ENCODE measurements at regions of chr4 and their contacts with region 1.

Region 1: DNA sequence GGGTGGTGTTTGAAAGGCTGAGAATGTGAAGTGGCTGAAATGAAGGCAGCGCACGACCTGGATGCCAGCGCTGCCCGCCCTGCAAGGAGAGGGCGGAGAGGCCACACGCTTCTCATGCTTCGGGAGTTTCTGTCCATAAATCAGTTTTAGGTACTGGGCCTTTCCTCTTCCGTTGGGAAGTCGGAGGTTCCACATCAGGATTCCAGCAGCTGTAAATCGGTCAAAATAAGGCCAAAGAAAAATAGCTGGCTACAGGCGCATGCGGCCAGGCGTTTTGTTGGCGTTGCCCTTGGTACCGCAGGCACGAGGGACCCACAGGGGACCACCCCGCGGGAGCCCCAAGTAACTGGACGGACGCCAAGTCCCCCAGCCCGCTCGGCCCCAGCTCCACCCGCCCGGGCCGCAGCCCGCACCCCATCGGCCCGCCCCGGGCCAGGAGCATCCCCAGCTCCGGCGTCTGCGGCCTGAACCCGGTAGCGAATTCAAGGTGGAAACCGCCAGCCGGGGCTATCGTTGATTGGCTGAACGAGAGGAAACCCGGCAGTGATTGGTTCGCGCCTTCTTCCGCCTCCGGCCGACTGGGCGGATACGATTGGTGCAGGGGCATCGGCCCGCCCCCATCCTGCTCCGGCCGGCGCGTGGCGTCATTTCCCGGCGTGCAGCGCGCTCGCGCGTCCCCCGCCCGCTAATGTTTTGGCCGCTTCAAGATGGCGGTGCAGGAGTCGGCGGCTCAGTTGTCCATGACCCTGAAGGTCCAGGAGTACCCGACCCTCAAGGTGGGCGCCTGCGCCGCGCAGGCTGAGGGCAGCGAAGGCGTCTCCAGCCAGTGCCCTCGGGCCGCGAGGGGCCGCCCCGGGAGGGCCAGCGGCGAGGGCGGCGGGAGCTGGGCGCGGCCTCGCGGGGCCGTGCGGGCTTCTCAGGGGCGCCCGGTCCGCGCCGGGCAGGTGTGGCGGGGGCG is at the start of gene MAEA:
- DNase-seq: peak; percentile 91 to 97 (median 96)
- ATAC-seq: peak; percentile 98
- H3K4me3 ChIP-seq: peak within 1 kb of the TSS; percentile 96
- H3K4me3 Mint-ChIP-seq: peak within 1 kb of the TSS; percentile 91 to 99 (median 93)
- H3K27ac ChIP-seq: peak within 1 kb of the TSS; percentile 93
- H3K27ac Mint-ChIP-seq: peak within 1 kb of the TSS; percentile 88 to 94 (median 90)
- H3K4me1 ChIP-seq: peaks cover 22 to 34% of the 10 kb centered on the region in 2 donors
- H3K4me1 Mint-ChIP-seq: peaks cover 23 to 49% (median 37%) of the 10 kb centered on the region in 7 donors
- H3K27me3 ChIP-seq: no peaks in the 10 kb centered on the region
- H3K27me3 Mint-ChIP-seq: no peaks in the 10 kb centered on the region
- total RNA-seq, gene MAEA: 56.2 to 92.2 (median 79.4) TPM

Region 2: DNA sequence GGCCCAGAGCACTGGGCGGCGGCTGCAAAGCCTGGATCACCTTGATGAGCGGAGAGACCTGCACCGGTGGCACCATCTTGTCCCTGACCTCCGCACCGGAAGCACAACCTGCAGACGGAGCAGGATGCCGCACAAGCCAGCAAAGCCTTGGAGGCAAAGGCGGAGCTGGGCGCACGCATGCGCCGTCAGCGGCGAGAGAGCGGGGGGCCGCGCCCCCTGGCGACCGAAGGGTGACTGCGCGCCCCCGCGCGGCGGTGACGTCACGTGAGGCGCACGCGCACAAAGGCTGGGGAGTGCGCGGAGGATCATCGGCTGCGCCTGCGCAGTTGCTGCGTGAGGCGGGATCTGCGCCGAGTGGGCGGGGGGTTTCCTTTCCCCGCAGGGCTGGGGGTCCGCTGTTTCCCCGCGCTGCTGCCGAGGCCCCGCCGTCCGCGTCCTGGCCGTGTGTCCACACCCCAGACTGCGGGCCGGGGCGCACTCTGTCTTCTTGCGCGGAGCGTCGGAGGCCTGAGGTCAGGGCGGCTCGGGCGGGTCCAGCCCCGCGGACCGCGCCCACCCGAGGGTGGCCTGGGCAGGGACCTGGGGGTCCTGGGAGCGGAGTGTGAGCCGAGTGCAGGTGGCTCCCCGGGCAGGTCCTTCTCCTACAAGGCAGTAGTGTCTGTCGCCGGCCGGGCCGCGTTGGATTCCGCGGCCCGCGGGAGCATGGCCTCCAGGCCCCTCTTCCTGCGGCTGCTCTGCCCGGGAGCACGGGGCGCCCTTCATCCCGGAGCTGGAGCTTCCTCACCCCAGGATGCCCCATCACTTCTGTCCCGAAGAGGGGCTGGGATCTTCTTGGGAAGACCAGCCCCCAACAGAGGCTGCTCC is 615.1 kb before region 1 on chr4 and contains the starts of genes ATP5ME and MYL5:
- CTCF ChIA-PET with region 1: no interaction called
- POLR2A ChIA-PET with region 1: interaction called, 3 read pairs
- intact Hi-C with region 1: loop called in 1 of 2 experiments (anchors 1 kb)
- DNase-seq: peak; percentile 97 to 100 (median 99)
- ATAC-seq: peak; percentile 96
- H3K4me3 ChIP-seq: peak within 1 kb of the TSS; percentile 88
- H3K4me3 Mint-ChIP-seq: peak within 1 kb of the TSS; percentile 84 to 92 (median 88)
- H3K27ac ChIP-seq: peak within 1 kb of the TSS; percentile 100
- H3K27ac Mint-ChIP-seq: peak within 1 kb of the TSS; percentile 80 to 91 (median 89)
- H3K4me1 ChIP-seq: peaks cover 7 to 16% of the 10 kb centered on the region in 2 donors
- H3K4me1 Mint-ChIP-seq: peaks cover 7 to 15% (median 8%) of the 10 kb centered on the region in 7 donors
- H3K27me3 ChIP-seq: no peaks in the 10 kb centered on the region
- H3K27me3 Mint-ChIP-seq: no peaks in the 10 kb centered on the region
- total RNA-seq, gene ATP5ME: 115 to 183 (median 123) TPM
- total RNA-seq, gene MYL5: 19.9 to 32.7 (median 23.8) TPM

Region 3: DNA sequence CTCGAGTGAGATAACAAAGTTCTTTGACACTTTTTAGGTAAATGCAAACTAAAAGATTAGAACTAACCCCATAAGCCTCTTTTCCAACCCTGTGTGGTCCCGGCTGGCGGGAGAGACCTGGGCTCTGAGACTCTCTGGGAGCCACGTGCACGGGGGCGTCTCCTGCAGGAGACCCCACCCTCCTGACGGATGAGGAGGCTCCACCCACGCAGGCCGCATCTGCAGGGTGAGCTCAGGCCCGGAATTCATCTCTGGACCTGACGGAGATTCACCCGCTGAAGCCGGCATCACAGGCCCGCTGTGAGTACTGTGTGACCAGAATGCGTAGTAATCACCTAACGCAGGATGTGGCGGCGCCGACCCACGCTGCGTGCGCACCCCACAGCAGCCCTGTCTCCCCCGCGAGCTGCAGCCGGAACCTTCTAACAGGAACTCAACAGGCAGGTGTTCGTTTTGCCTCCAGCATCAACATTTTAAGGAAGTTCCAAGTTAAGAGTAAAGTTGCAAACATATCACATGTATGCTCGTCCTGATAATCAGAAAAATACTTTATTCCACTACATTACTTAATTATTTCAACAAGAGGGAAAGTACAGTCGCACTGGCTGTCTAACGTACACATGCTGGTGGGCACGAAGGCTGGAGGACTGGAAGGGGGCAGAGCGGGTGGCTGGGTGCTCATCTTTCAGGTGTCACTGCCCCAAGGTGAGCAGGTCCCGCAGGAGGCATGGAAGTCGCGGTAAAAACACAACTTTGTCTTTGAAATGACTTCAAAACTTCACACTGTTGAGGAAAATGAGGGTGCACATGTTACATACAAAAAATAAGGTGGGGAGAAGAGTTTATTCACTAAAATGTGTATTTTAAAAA is 233.5 kb before region 1 on chr4:
- CTCF ChIA-PET with region 1: no interaction called
- POLR2A ChIA-PET with region 1: no interaction called
- intact Hi-C with region 1: loop called in 1 of 2 experiments (anchors 1 kb)
- DNase-seq: peak; percentile 65 to 93 (median 91)
- ATAC-seq: peak; percentile 96
- H3K4me3 ChIP-seq: peak overlapping the region; percentile 74
- H3K4me3 Mint-ChIP-seq: peak overlapping the region; percentile 74 to 89 (median 85)
- H3K27ac ChIP-seq: peak overlapping the region; percentile 67
- H3K27ac Mint-ChIP-seq: peak overlapping the region; percentile 87 to 98 (median 95)
- H3K4me1 ChIP-seq: peaks cover 13 to 14% of the 10 kb centered on the region in 2 donors
- H3K4me1 Mint-ChIP-seq: peaks cover 8 to 17% (median 10%) of the 10 kb centered on the region in 7 donors
- H3K27me3 ChIP-seq: no peaks in the 10 kb centered on the region
- H3K27me3 Mint-ChIP-seq: peaks cover 0 to 17% (median 0%) of the 10 kb centered on the region in 5 donors

Region 4: DNA sequence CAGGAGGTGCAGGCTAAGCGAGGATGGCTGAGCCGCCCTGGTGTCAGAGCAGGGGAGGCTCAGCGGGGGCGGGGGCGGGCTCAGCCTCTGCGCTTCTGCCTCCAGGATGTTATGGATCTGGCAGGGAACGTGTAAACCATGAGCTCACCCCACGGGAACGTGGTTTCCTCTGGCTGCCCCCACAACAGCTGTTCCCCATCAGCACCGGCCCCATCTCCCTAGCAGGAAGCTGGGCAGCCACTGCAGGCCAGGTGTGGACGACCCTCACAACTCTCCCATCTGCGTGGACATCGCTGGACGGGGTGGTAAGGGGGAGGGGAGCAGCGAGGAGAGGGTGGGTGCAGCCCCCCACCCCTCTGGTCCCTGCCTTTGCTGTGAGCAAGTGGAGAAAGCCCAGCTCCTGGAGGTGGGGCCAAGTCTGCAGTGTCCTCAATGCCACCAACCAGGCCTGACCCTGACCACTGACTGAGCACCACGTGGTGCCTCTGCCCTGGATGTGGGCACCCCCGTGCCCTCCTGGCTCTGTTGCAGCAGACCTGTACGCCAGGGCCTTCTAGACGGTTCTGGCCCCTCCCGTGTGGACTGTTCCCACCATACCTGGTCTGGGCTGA is 89.0 kb before region 1 on chr4:
- CTCF ChIA-PET with region 1: no interaction called
- POLR2A ChIA-PET with region 1: interaction called, 3 read pairs
- intact Hi-C with region 1: loop called in 1 of 2 experiments (anchors 1 kb)
- DNase-seq: peak in 1 of 9 donors; percentile 26
- ATAC-seq: no peak
- H3K4me3 ChIP-seq: peak overlapping the region; percentile 85
- H3K4me3 Mint-ChIP-seq: peak overlapping the region; percentile 29 to 93 (median 84)
- H3K27ac ChIP-seq: peak overlapping the region; percentile 68
- H3K27ac Mint-ChIP-seq: peak overlapping the region in 5 of 9 donors; percentile 19 to 99 (median 59)
- H3K4me1 ChIP-seq: peaks cover 21 to 59% of the 10 kb centered on the region in 2 donors
- H3K4me1 Mint-ChIP-seq: peaks cover 12 to 57% (median 43%) of the 10 kb centered on the region in 7 donors
- H3K27me3 ChIP-seq: no peaks in the 10 kb centered on the region
- H3K27me3 Mint-ChIP-seq: no peaks in the 10 kb centered on the region

Region 5: DNA sequence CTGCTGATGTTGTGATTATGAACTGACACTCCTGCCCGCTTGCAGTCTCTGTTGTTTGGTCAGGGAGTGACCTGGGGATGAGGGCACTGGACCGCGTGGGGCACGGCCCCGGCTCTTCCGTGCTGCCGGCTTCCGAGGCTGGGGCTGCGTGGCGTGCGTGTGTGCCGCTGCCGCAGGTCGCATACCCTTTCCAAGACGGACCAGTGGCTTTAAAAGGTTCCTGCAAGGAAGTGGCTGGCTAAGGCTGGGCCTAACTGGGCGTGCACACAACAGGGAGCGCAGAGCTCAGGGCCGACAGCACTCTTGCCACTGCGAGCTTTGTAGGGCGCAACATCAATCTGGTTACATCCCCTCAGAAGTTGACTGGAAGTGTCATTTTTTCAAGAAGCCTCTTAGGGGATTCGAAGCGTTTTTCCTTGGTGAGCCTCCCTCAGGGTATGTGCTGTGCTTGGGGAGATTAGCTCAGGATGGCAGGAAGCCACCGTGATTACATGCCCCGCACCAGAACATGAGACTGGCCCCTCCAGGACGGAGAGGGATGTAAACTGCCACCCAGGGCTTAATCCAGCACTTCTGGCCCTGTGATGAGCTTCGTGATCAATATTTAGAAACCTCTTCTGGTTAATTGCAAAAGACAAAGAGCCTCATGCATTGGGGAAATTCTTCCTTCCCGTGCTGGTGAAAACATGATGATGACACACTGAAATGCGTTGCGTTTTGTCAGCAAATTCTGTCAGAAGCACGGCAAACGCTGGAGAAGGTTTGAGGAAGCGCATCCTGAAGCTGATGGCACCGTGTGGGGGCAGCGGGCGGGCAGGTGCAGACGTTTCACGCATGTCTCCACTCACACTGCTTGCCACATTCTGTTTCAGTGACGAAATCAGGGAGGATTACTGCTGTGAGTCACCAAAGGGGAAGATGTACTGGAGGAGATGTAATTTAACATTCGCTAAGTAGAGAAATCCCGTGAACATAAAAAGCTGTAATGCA is 11.3 kb after region 1 on chr4:
- CTCF ChIA-PET with region 1: no interaction called
- POLR2A ChIA-PET with region 1: interaction called, 11 read pairs
- intact Hi-C with region 1: no loop called
- DNase-seq: peak in 1 of 9 donors; percentile 37
- ATAC-seq: peak; percentile 85
- H3K4me3 ChIP-seq: no peak overlapping the region
- H3K4me3 Mint-ChIP-seq: peak overlapping the region in 1 of 10 donors; percentile 33
- H3K27ac ChIP-seq: no peak overlapping the region
- H3K27ac Mint-ChIP-seq: peak overlapping the region in 5 of 9 donors; percentile 21 to 79 (median 40)
- H3K4me1 ChIP-seq: peaks cover 0 to under 1% of the 10 kb centered on the region in 2 donors
- H3K4me1 Mint-ChIP-seq: peaks cover 24 to 64% (median 52%) of the 10 kb centered on the region in 7 donors
- H3K27me3 ChIP-seq: no peaks in the 10 kb centered on the region
- H3K27me3 Mint-ChIP-seq: no peaks in the 10 kb centered on the region

Region 6: DNA sequence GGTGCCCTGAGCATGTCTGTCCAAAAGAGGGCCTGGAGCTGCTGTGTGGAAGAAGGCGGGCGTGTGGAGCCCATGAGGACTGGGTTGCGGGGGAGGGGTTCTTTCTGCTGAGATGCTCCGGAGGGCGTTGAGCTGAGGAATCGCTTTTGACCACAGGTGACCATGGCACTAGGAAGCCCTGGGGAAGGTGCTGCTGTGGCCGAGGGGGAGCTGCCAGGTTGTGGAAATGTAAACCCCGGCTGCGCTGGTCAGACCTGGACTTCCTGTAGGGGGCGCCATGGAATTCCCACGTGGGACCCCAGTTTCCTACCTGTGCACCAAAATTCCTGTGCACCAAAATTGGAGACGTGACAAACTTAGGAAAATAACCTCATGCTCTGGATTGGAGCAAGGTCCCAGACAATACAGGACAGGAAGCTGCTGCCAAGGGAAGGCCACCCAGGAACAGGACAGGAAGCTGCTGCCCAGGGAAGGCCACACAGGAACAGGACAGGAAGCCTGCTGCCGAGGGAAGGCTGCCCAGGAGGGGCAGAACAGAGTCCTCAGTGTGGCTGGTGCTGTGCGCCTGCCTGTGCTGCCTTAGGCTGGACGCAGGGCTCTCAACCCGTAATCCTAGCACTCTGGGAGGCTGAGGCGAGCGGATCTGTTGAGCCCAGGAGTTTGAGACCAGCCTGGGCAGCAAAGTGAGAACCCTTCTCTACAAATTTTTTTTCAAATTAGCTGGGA is 29.2 kb after region 1 on chr4:
- CTCF ChIA-PET with region 1: no interaction called
- POLR2A ChIA-PET with region 1: no interaction called
- intact Hi-C with region 1: no loop called
- DNase-seq: peak in 1 of 9 donors; percentile 15
- ATAC-seq: no peak
- H3K4me3 ChIP-seq: no peak overlapping the region
- H3K4me3 Mint-ChIP-seq: no peak overlapping the region
- H3K27ac ChIP-seq: no peak overlapping the region
- H3K27ac Mint-ChIP-seq: peak overlapping the region in 1 of 9 donors; percentile 65
- H3K4me1 ChIP-seq: peaks cover 0 to 7% of the 10 kb centered on the region in 2 donors
- H3K4me1 Mint-ChIP-seq: peaks cover 8 to 26% (median 16%) of the 10 kb centered on the region in 7 donors
- H3K27me3 ChIP-seq: no peaks in the 10 kb centered on the region
- H3K27me3 Mint-ChIP-seq: no peaks in the 10 kb centered on the region

Region 7: DNA sequence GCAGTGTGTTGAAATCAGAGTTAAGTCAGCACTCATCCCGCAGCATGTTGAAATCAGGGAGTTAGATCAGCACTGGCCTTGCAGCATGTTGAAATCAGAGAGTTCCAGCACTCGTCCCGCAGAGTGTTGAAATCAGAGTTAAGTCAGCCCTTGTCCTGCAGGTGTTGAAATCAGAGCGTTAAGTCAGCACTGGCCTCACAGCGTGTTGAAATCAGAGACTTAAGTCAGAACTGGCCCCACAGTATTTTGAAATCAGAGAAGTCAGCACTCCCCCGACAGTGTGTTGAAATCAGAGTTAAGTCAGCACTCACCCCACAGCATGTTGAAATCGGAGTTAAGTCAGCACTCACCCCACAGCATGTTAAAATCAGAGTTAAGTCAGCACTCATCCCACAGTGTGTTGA is 46.6 kb after region 1 on chr4:
- CTCF ChIA-PET with region 1: no interaction called
- POLR2A ChIA-PET with region 1: no interaction called
- intact Hi-C with region 1: no loop called
- DNase-seq: no peak
- ATAC-seq: no peak
- H3K4me3 ChIP-seq: no peak overlapping the region
- H3K4me3 Mint-ChIP-seq: no peak overlapping the region
- H3K27ac ChIP-seq: no peak overlapping the region
- H3K27ac Mint-ChIP-seq: peak overlapping the region in 3 of 9 donors; percentile 38 to 69 (median 55)
- H3K4me1 ChIP-seq: peaks cover 9% of the 10 kb centered on the region in 2 donors
- H3K4me1 Mint-ChIP-seq: peaks cover 9 to 34% (median 13%) of the 10 kb centered on the region in 7 donors
- H3K27me3 ChIP-seq: no peaks in the 10 kb centered on the region
- H3K27me3 Mint-ChIP-seq: no peaks in the 10 kb centered on the region

Region 8: DNA sequence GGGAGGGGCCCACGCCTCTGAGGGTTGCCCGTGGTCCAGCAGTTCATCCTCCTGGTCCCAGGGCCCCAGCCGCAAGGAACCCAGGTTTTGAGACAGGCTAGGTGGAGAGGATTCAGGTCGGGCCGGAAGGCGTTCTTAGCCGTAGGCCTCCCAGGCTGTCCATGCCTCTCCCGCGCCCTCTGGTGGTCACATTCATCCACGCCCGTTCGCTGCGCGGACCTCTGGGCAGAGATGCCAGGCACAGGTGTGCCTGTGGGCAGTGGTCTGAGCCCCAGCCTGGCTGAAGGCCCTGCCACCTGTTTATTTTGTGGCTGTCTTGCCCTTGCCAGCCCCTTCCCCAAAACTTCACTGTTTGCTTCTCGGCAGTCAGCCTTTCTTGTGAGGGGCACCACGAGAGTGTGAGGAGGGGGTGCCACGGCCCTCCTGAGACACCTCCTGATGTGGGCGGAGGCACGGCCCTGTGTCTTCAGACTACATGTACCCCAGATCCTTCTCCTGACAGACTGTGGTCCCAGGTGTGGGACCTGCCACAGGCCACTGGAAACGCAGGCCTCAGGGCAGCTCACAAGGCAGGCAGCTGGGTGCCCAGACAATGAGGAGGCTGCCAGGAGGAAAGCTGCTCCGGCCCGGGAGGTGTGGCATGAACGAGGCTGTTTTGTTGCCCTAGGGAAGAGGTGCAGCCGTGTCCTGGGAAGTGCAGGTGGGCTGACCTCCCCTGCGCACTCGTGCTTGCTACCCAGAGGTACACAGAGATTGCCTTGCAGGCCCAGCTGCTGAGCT is 62.6 kb after region 1 on chr4:
- CTCF ChIA-PET with region 1: interaction called, 5 read pairs
- POLR2A ChIA-PET with region 1: interaction called, 40 read pairs
- intact Hi-C with region 1: loop called in 1 of 2 experiments (anchors 1 kb)
- DNase-seq: peak; percentile 71 to 91 (median 83)
- ATAC-seq: peak; percentile 45
- H3K4me3 ChIP-seq: no peak overlapping the region
- H3K4me3 Mint-ChIP-seq: peak overlapping the region in 2 of 10 donors; percentile 50 to 53
- H3K27ac ChIP-seq: peak overlapping the region; percentile 52
- H3K27ac Mint-ChIP-seq: peak overlapping the region in 8 of 9 donors; percentile 48 to 91 (median 74)
- H3K4me1 ChIP-seq: peaks cover 10 to 24% of the 10 kb centered on the region in 2 donors
- H3K4me1 Mint-ChIP-seq: peaks cover 20 to 42% (median 29%) of the 10 kb centered on the region in 7 donors
- H3K27me3 ChIP-seq: no peaks in the 10 kb centered on the region
- H3K27me3 Mint-ChIP-seq: no peaks in the 10 kb centered on the region

Region 9: DNA sequence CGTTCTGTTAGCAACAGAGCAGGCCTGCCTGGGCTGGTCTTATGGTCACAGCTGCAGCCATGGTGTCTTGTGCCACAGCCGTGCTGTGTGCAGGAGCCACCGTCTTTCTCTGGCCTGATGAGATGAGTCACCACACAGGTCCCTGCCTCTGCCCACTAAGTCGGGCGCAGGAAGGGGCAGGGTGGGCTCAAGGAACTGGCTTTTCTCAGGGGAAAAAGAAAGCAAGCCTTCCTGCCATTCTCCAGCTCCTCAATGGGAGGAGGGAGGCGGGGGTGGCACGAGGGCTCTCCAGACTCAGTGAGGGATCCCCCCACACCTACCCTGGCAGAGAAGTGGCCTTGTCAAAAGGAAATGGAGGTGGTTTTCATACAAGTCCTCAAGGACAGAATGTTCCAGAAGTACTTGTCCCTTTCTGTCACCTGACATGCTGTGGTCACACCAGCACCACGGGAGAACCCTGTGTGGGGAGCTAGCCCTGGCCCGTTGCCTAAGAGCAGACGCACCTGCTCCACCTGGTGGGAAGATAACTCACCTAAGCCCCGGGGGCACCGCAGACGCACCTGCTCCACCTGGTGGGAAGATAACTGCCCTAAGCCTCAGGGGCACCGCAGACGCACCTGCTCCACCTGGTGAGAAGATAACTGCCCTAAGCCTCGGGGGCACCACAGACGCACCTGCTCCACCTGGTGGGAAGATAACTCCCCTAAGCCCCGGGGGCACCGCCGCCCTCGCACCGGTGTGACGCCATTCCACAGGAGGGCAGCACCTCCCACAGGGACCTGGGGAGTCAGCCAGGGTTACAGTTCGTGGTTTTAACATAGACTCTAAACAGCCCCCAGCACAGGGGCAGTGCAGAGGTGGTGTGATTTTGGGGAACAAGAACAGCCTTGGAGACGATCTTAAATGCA is 76.0 kb after region 1 on chr4:
- CTCF ChIA-PET with region 1: no interaction called
- POLR2A ChIA-PET with region 1: no interaction called
- intact Hi-C with region 1: no loop called
- DNase-seq: no peak
- ATAC-seq: no peak
- H3K4me3 ChIP-seq: no peak overlapping the region
- H3K4me3 Mint-ChIP-seq: no peak overlapping the region
- H3K27ac ChIP-seq: no peak overlapping the region
- H3K27ac Mint-ChIP-seq: no peak overlapping the region
- H3K4me1 ChIP-seq: no peaks in the 10 kb centered on the region
- H3K4me1 Mint-ChIP-seq: peaks cover 0 to 3% (median 0%) of the 10 kb centered on the region in 7 donors
- H3K27me3 ChIP-seq: no peaks in the 10 kb centered on the region
- H3K27me3 Mint-ChIP-seq: no peaks in the 10 kb centered on the region

Region 10: GRCh38 chr4:1712216-1713002 is 422.9 kb after region 1 on chr4 and contains the start of gene SLBP:
- CTCF ChIA-PET with region 1: no interaction called
- POLR2A ChIA-PET with region 1: interaction called, 5 read pairs
- intact Hi-C with region 1: loop called in 1 of 2 experiments (anchors 2 kb)
- DNase-seq: peak; percentile 98 to 99 (median 98)
- ATAC-seq: peak; percentile 92
- H3K4me3 ChIP-seq: peak within 1 kb of the TSS; percentile 100
- H3K4me3 Mint-ChIP-seq: peak within 1 kb of the TSS; percentile 89 to 98 (median 94)
- H3K27ac ChIP-seq: peak within 1 kb of the TSS; percentile 99
- H3K27ac Mint-ChIP-seq: peak within 1 kb of the TSS; percentile 90 to 98 (median 94)
- H3K4me1 ChIP-seq: peaks cover 32 to 34% of the 10 kb centered on the region in 2 donors
- H3K4me1 Mint-ChIP-seq: peaks cover 11 to 67% (median 59%) of the 10 kb centered on the region in 7 donors
- H3K27me3 ChIP-seq: no peaks in the 10 kb centered on the region
- H3K27me3 Mint-ChIP-seq: no peaks in the 10 kb centered on the region
- total RNA-seq, gene SLBP: 29.5 to 103 (median 30.3) TPM